ENCODE measurements at regions of chr6 and their contacts with region 1.

Region 1: GRCh38 chr6:37566111-37566949 is 66.6 kb upstream of the CCDC167 start:
- DNase-seq: no peak
- H3K4me3 ChIP-seq: peak overlapping the region; percentile 54
- H3K27ac ChIP-seq: no peak overlapping the region
- H3K27me3 ChIP-seq: peaks cover 24% of the 10 kb centered on the region
- CTCF ChIP-seq: peak; percentile 81

Region 2: GRCh38 chr6:37137201-37138090 is 428.9 kb before region 1 on chr6:
- CTCF ChIA-PET with region 1: no interaction called
- POLR2A ChIA-PET with region 1: no interaction called
- DNase-seq: peak; percentile 93
- H3K4me3 ChIP-seq: peak overlapping the region; percentile 36
- H3K27ac ChIP-seq: peak overlapping the region; percentile 92
- H3K27me3 ChIP-seq: no peaks in the 10 kb centered on the region
- CTCF ChIP-seq: no peak

Region 3: GRCh38 chr6:37483917-37484785 is 82.2 kb before region 1 on chr6:
- CTCF ChIA-PET with region 1: interaction called, 10 read pairs
- POLR2A ChIA-PET with region 1: no interaction called
- DNase-seq: no peak
- H3K4me3 ChIP-seq: no peak overlapping the region
- H3K27ac ChIP-seq: no peak overlapping the region
- H3K27me3 ChIP-seq: no peaks in the 10 kb centered on the region
- CTCF ChIP-seq: peak; percentile 82

Region 4: GRCh38 chr6:37554480-37554819 is 11.9 kb before region 1 on chr6:
- CTCF ChIA-PET with region 1: interaction called, 12 read pairs
- POLR2A ChIA-PET with region 1: interaction called, 3 read pairs
- DNase-seq: no peak
- H3K4me3 ChIP-seq: no peak overlapping the region
- H3K27ac ChIP-seq: no peak overlapping the region
- H3K27me3 ChIP-seq: no peaks in the 10 kb centered on the region
- CTCF ChIP-seq: no peak

Region 5: DNA sequence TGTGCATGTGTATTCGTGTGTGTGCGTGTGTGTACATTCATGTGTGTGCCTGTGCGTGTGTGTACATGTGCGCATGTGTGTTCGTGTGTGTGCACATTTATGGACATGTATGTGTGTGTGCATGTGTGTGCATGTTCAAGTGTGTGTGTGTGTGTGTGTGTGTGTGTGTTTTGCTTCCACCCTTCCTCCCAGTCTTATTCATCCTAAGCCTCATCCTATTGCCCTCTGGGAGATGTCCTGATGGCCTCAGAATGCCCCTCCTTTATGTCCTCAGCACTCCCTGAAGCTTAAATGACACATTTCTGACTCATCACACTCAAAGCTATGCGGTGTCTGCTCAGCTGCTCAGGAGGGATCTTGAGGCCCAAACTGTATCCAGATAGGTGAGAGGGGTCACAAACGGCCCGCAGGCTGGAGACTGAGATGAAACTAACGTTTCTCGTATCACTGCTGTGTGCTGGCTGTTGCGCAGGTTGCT is 10.0 kb after region 1 on chr6:
- CTCF ChIA-PET with region 1: interaction called, 14 read pairs
- POLR2A ChIA-PET with region 1: no interaction called
- DNase-seq: peak; percentile 32
- H3K4me3 ChIP-seq: no peak overlapping the region
- H3K27ac ChIP-seq: no peak overlapping the region
- H3K27me3 ChIP-seq: no peaks in the 10 kb centered on the region
- CTCF ChIP-seq: no peak

Region 6: GRCh38 chr6:37691904-37692806 is 125.8 kb after region 1 on chr6:
- CTCF ChIA-PET with region 1: interaction called, 10 read pairs
- POLR2A ChIA-PET with region 1: no interaction called
- DNase-seq: no peak
- H3K4me3 ChIP-seq: no peak overlapping the region
- H3K27ac ChIP-seq: peak overlapping the region; percentile 65
- H3K27me3 ChIP-seq: peaks cover 3% of the 10 kb centered on the region
- CTCF ChIP-seq: peak; percentile 96